Upper lobe of right lung (tissue), 1 donor: ENCODE measurements at regions of chr1 and their contacts with region 1.

Region 1: GRCh38 chr1:203702130-203702577 is 62.8 kb upstream of the LAX1 start:
- DNase-seq: no peak
- ATAC-seq: peak; percentile 77
- H3K4me3 ChIP-seq: no peak overlapping the region
- H3K27ac ChIP-seq: no peak overlapping the region
- H3K4me1 ChIP-seq: no peaks in the 10 kb centered on the region
- H3K27me3 ChIP-seq: no peaks in the 10 kb centered on the region
- CTCF ChIP-seq: peak; percentile 82

Region 2: GRCh38 chr1:203504397-203505250 is 197.5 kb before region 1 on chr1:
- intact Hi-C with region 1: loop called (anchors 5 kb)
- DNase-seq: peak; percentile 84
- ATAC-seq: peak; percentile 91
- H3K4me3 ChIP-seq: no peak overlapping the region
- H3K27ac ChIP-seq: no peak overlapping the region
- H3K4me1 ChIP-seq: peaks cover 5% of the 10 kb centered on the region
- H3K27me3 ChIP-seq: no peaks in the 10 kb centered on the region
- CTCF ChIP-seq: peak; percentile 87

Region 3: GRCh38 chr1:203906932-203907331 is 204.8 kb after region 1 on chr1:
- intact Hi-C with region 1: no loop called
- DNase-seq: no peak
- ATAC-seq: no peak
- H3K4me3 ChIP-seq: no peak overlapping the region
- H3K27ac ChIP-seq: no peak overlapping the region
- H3K4me1 ChIP-seq: no peaks in the 10 kb centered on the region
- H3K27me3 ChIP-seq: no peaks in the 10 kb centered on the region
- CTCF ChIP-seq: no peak

Region 4: GRCh38 chr1:204565617-204566582 is 863.7 kb after region 1 on chr1:
- intact Hi-C with region 1: no loop called
- DNase-seq: no peak
- ATAC-seq: peak; percentile 81
- H3K4me3 ChIP-seq: no peak overlapping the region
- H3K27ac ChIP-seq: no peak overlapping the region
- H3K4me1 ChIP-seq: no peaks in the 10 kb centered on the region
- H3K27me3 ChIP-seq: no peaks in the 10 kb centered on the region
- CTCF ChIP-seq: peak; percentile 61